Left colon (tissue), 2 donors: ENCODE measurements at regions of chr6 and their contacts with region 1.

Region 1: GRCh38 chr6:121430514-121431460 is 4.7 kb upstream of the GJA1 start:
- DNase-seq: no peak
- ATAC-seq: peak; percentile 45

Region 2: GRCh38 chr6:121334299-121335086 is 96.3 kb before region 1 on chr6 and contains the start of gene TBC1D32:
- intact Hi-C with region 1: no loop called
- DNase-seq: peak; percentile 92
- ATAC-seq: peak; percentile 99
- total RNA-seq, gene TBC1D32: 7.8 to 9.0 TPM

Region 3: DNA sequence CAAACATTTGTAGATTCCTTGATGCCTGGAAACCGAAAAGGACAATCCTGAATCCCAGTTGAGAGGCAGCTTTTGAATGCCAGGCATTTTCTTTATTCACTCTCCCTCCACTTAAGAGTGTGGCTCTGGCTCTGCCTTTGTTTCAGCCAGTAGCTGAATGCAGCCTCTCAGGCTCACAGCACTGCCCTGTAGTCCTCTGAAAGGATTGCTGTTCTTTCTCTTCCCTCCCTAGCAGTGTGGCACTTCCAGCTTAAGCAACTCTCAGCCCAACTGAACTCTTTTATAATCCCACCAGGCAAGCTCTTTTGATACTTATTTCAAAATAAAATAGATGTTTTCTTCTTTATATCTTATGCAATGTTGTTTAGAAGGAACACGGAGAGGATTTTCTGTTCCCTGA is 420.3 kb after region 1 on chr6:
- intact Hi-C with region 1: loop called in 1 of 2 experiments (anchors 10 kb)
- DNase-seq: no peak
- ATAC-seq: no peak

Region 4: DNA sequence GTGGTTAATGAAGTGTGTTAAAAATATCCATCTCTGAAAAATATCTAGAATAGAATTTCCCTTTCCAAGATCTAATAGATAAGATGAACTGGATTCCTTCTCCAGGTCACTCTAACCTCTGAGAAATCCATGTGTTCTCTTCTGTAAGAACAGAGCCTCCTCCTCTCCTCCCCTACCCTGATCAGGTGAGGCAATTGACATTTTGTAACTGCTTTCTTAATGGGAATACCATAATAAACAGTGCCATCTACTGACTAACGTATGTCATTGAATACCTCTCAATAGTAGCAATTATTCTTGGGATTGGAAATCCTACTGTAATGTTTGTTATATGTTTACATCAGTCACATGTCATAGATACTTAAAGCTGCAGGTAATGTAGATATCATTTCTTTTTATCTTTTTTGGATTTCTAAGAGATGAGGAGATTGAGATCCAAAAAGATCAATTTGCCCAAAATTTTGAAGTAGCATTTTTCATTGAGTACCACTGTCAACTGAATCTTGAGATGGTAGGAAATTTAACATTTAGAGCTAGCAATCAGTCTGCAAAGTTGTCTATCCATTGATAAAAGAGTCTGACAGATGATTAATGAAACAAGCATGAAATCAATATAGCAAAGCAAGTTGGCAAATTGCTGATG is 602.9 kb after region 1 on chr6:
- intact Hi-C with region 1: loop called in 1 of 2 experiments (anchors 2 kb)
- DNase-seq: no peak
- ATAC-seq: peak; percentile 62